ENCODE measurements at regions of chr3 and their contacts with region 1.

Region 1: GRCh38 chr3:44761424-44762169 is at the starts of genes KIAA1143 and KIF15:
- DNase-seq: peak; percentile 98
- ATAC-seq: peak; percentile 98
- H3K4me3 ChIP-seq: peak within 1 kb of the TSS; percentile 70 to 90 (median 88)
- H3K4me3 Mint-ChIP-seq: peak within 1 kb of the TSS; percentile 93
- H3K27ac ChIP-seq: peak within 1 kb of the TSS; percentile 65 to 91
- H3K27ac Mint-ChIP-seq: peak within 1 kb of the TSS; percentile 96
- H3K4me1 ChIP-seq: peaks cover 6 to 15% of the 10 kb centered on the region in 2 donors
- H3K4me1 Mint-ChIP-seq: peaks cover 24% of the 10 kb centered on the region
- H3K27me3 ChIP-seq: no peaks in the 10 kb centered on the region
- H3K27me3 Mint-ChIP-seq: no peaks in the 10 kb centered on the region
- CTCF ChIP-seq: no peak
- total RNA-seq, gene KIAA1143: 29.4 and 32.4 TPM in 2 replicates
- total RNA-seq, gene KIF15: 1.4 and 2.2 TPM in 2 replicates

Region 2: GRCh38 chr3:42772670-42773408 is 1988.8 kb before region 1 on chr3 and contains the start of gene CCDC13:
- CTCF ChIA-PET with region 1: no interaction called
- POLR2A ChIA-PET with region 1: no interaction called
- intact Hi-C with region 1: loop called (anchors 5 kb)
- DNase-seq: peak; percentile 98
- ATAC-seq: peak; percentile 88
- H3K4me3 ChIP-seq: peak within 1 kb of the TSS; percentile 46 to 87 (median 62)
- H3K4me3 Mint-ChIP-seq: peak within 1 kb of the TSS; percentile 90
- H3K27ac ChIP-seq: peak within 1 kb of the TSS; percentile 66 to 81
- H3K27ac Mint-ChIP-seq: peak within 1 kb of the TSS; percentile 92
- H3K4me1 ChIP-seq: peaks cover 4 to 10% of the 10 kb centered on the region in 2 donors
- H3K4me1 Mint-ChIP-seq: peaks cover 11% of the 10 kb centered on the region
- H3K27me3 ChIP-seq: no peaks in the 10 kb centered on the region
- H3K27me3 Mint-ChIP-seq: no peaks in the 10 kb centered on the region
- CTCF ChIP-seq: no peak
- total RNA-seq, gene CCDC13: 1.9 and 2.5 TPM in 2 replicates

Region 3: GRCh38 chr3:44338010-44338827 is 423.4 kb before region 1 on chr3 and contains the start of gene TCAIM:
- CTCF ChIA-PET with region 1: no interaction called
- POLR2A ChIA-PET with region 1: interaction called, 3 read pairs
- intact Hi-C with region 1: loop called (anchors 1 kb)
- DNase-seq: peak; percentile 100
- ATAC-seq: peak; percentile 90
- H3K4me3 ChIP-seq: peak within 1 kb of the TSS; percentile 85 to 97 (median 87)
- H3K4me3 Mint-ChIP-seq: peak within 1 kb of the TSS; percentile 99
- H3K27ac ChIP-seq: peak within 1 kb of the TSS; percentile 80 to 88
- H3K27ac Mint-ChIP-seq: peak within 1 kb of the TSS; percentile 99
- H3K4me1 ChIP-seq: peaks cover 16 to 19% of the 10 kb centered on the region in 2 donors
- H3K4me1 Mint-ChIP-seq: peaks cover 29% of the 10 kb centered on the region
- H3K27me3 ChIP-seq: no peaks in the 10 kb centered on the region
- H3K27me3 Mint-ChIP-seq: peaks cover 9% of the 10 kb centered on the region
- CTCF ChIP-seq: no peak
- total RNA-seq, gene TCAIM: 15.8 and 16.7 TPM in 2 replicates

Region 4: GRCh38 chr3:44685128-44685800 is 76.3 kb before region 1 on chr3:
- CTCF ChIA-PET with region 1: no interaction called
- POLR2A ChIA-PET with region 1: no interaction called
- intact Hi-C with region 1: loop called (anchors 1 kb)
- DNase-seq: peak; percentile 85
- ATAC-seq: peak; percentile 86
- H3K4me3 ChIP-seq: peak overlapping the region; percentile 46 to 72 (median 70)
- H3K4me3 Mint-ChIP-seq: peak overlapping the region; percentile 91
- H3K27ac ChIP-seq: peak overlapping the region in 1 of 2 donors; percentile 78
- H3K27ac Mint-ChIP-seq: peak overlapping the region; percentile 69
- H3K4me1 ChIP-seq: peaks cover 11% of the 10 kb centered on the region in 2 donors
- H3K4me1 Mint-ChIP-seq: peaks cover 21% of the 10 kb centered on the region
- H3K27me3 ChIP-seq: peaks cover 0 to 17% (median 8%) of the 10 kb centered on the region in 4 experiments
- H3K27me3 Mint-ChIP-seq: peaks cover 20% of the 10 kb centered on the region
- CTCF ChIP-seq: no peak

Region 5: DNA sequence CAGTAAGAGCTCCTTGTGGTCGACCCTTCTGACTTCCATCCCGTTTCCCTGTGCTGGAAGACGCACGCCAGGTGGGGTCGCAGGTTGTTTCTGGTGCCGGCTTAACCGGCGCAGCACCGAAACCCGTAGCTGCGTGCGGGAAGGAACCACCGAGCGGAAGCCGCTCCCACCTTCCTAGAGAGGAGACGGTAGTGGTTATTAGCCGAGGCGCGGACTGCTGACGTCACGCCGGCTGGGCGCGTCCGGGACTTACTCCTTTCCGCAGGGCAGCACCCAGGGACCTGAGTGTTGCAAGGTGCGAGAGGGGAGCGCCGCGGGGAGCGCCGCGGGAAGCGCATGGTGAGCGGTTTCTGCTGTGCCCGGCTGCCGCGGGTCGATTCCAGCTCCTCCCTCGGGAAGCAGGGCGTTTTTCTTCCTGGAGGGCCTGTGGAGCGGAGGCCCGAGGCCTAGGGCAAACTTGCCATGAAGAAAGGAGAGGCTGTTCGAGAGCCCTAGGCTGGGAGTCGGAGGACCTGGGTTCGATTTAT is 32.1 kb before region 1 on chr3 and contains the start of gene ZNF501:
- CTCF ChIA-PET with region 1: interaction called, 4 read pairs
- POLR2A ChIA-PET with region 1: interaction called, 6 read pairs
- intact Hi-C with region 1: loop called (anchors 1 kb)
- DNase-seq: peak; percentile 90
- ATAC-seq: peak; percentile 94
- H3K4me3 ChIP-seq: peak within 1 kb of the TSS; percentile 35 to 89 (median 77)
- H3K4me3 Mint-ChIP-seq: peak within 1 kb of the TSS; percentile 96
- H3K27ac ChIP-seq: peak within 1 kb of the TSS; percentile 15 to 32
- H3K27ac Mint-ChIP-seq: peak within 1 kb of the TSS; percentile 86
- H3K4me1 ChIP-seq: peaks cover 6 to 12% of the 10 kb centered on the region in 2 donors
- H3K4me1 Mint-ChIP-seq: peaks cover 13% of the 10 kb centered on the region
- H3K27me3 ChIP-seq: no peaks in the 10 kb centered on the region
- H3K27me3 Mint-ChIP-seq: no peaks in the 10 kb centered on the region
- CTCF ChIP-seq: no peak
- total RNA-seq, gene ZNF501: 6.1 and 7.2 TPM in 2 replicates

Region 6: DNA sequence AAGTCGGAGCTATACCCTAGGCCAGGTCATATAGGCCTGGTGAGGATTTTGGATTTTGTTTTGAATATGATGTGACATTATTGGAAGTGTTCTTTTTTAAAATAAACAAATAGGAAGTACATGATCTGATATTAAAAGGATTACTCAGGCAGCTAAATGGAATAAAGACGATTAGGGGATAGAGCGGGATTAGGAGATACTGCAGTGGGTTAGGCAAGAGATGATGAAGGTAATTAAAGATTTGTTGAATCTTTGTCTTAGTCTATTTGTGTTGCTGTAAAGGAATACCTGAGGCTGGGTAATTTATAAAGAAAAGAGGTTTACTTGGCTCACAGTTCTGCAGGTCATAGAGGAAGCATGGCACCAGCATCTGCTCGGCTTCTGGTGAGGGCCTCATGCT is 21.3 kb after region 1 on chr3:
- CTCF ChIA-PET with region 1: no interaction called
- POLR2A ChIA-PET with region 1: no interaction called
- intact Hi-C with region 1: no loop called
- DNase-seq: no peak
- ATAC-seq: no peak
- H3K4me3 ChIP-seq: no peak overlapping the region
- H3K4me3 Mint-ChIP-seq: no peak overlapping the region
- H3K27ac ChIP-seq: no peak overlapping the region
- H3K27ac Mint-ChIP-seq: no peak overlapping the region
- H3K4me1 ChIP-seq: no peaks in the 10 kb centered on the region
- H3K4me1 Mint-ChIP-seq: no peaks in the 10 kb centered on the region
- H3K27me3 ChIP-seq: no peaks in the 10 kb centered on the region
- H3K27me3 Mint-ChIP-seq: no peaks in the 10 kb centered on the region
- CTCF ChIP-seq: no peak

Region 7: DNA sequence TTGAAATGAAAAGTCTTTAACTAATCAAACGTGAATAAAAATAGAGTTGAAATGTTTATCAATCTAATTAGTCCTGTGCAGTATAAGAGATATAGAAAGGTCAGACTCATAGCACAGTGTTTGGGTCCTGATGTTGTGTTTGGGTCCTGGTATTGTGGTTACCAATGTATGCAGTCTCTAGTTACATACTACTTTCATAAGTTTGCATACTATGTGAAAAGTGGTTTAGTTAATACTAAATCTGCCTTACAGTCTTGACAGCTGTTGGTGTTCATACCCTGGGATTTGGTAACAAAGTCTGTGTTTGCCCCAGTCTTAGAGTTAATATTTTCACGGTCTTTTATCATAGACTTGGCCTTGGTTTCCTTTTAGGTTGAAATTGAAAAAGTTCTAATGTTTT is 41.7 kb after region 1 on chr3:
- CTCF ChIA-PET with region 1: no interaction called
- POLR2A ChIA-PET with region 1: no interaction called
- intact Hi-C with region 1: no loop called
- DNase-seq: no peak
- ATAC-seq: no peak
- H3K4me3 ChIP-seq: no peak overlapping the region
- H3K4me3 Mint-ChIP-seq: no peak overlapping the region
- H3K27ac ChIP-seq: no peak overlapping the region
- H3K27ac Mint-ChIP-seq: no peak overlapping the region
- H3K4me1 ChIP-seq: no peaks in the 10 kb centered on the region
- H3K4me1 Mint-ChIP-seq: no peaks in the 10 kb centered on the region
- H3K27me3 ChIP-seq: no peaks in the 10 kb centered on the region
- H3K27me3 Mint-ChIP-seq: no peaks in the 10 kb centered on the region
- CTCF ChIP-seq: no peak

Region 8: GRCh38 chr3:44976002-44976815 is 214.6 kb after region 1 on chr3 and contains the starts of genes EXOSC7 and ZDHHC3:
- CTCF ChIA-PET with region 1: interaction called, 3 read pairs
- POLR2A ChIA-PET with region 1: interaction called, 4 read pairs
- intact Hi-C with region 1: loop called (anchors 1 kb)
- DNase-seq: peak; percentile 93
- ATAC-seq: peak; percentile 94
- H3K4me3 ChIP-seq: peak within 1 kb of the TSS; percentile 85 to 98 (median 93)
- H3K4me3 Mint-ChIP-seq: peak within 1 kb of the TSS; percentile 93
- H3K27ac ChIP-seq: peak within 1 kb of the TSS; percentile 79 to 80
- H3K27ac Mint-ChIP-seq: peak within 1 kb of the TSS; percentile 93
- H3K4me1 ChIP-seq: peaks cover 25 to 27% of the 10 kb centered on the region in 2 donors
- H3K4me1 Mint-ChIP-seq: peaks cover 50% of the 10 kb centered on the region
- H3K27me3 ChIP-seq: no peaks in the 10 kb centered on the region
- H3K27me3 Mint-ChIP-seq: no peaks in the 10 kb centered on the region
- CTCF ChIP-seq: no peak
- total RNA-seq, gene EXOSC7: 32.9 and 40.0 TPM in 2 replicates
- total RNA-seq, gene ZDHHC3: 46.4 and 52.6 TPM in 2 replicates